ENCODE measurements at regions of chr12 and their contacts with region 1.

Region 1: DNA sequence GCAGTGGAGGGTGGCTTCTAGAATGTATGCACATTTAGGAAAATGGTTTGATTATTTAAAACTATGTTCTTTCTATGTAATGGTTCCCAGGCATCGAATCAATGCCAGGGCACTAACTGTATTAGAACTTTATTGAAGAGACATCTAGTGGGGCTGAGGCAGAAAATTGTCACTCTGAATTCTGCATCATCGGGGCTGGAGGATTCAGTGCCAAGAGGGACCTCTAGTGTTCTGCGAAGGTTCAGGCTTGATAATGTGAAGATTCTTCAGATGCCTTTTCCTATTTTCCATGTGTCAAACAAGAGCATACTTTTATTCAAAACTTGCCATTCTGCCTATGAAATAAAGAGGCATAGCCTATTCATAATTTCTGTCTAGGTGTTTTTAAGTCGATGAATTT is 146.3 kb downstream of the CAND1 start:
- DNase-seq: no peak
- H3K4me3 ChIP-seq: no peak overlapping the region
- H3K27ac ChIP-seq: no peak overlapping the region
- H3K4me1 ChIP-seq: peaks cover 3 to 25% (median 23%) of the 10 kb centered on the region in 4 experiments; a peak in 6 of 7 replicates
- H3K27me3 ChIP-seq: no peaks in the 10 kb centered on the region
- CTCF ChIP-seq: peak; percentile 30 to 73 (median 73)
- EP300 ChIP-seq: no peak
- POLR2A ChIP-seq: no peak
- RAD21 ChIP-seq: peak; percentile 85 to 86

Region 2: DNA sequence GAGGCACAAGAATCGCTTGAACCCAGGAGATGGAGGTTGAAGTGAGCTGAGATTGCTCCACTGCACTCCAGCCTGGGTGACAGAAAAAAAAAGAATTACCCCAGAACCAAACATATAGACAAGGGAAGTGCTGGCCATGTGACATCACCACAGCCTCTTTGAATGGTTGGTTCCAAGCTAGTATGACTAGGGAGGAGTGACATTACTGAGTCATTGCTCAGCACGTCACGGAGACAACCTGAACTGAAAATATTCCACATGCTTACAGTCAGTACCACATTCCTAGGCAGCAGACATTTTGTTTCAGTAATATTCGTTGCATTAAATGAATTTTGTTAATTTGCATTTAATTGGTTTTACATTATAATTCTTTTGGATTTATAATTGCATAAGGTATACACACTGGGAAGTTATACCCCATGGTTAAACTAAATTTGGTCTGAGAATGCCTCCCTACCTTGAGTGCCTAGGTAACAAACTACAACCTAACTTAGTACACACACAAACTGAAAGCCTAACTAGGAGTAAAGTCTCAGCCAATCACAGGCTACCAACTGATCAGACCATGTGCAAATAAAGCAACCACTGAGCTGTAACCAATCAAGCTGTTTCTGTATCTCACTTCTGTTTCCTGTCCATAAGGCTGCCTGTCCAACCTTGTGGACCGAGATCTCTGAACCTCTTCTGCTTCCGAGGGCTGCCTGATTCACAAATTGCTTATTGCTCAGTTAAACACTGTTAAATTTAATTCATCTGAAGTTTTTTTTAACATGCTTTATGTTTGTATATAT is 18.1 kb after region 1 on chr12:
- CTCF ChIA-PET with region 1: interaction called, 10 read pairs
- POLR2A ChIA-PET with region 1: interaction called, 3 read pairs
- DNase-seq: no peak
- H3K4me3 ChIP-seq: no peak overlapping the region
- H3K27ac ChIP-seq: no peak overlapping the region
- H3K4me1 ChIP-seq: no peaks in the 10 kb centered on the region
- H3K27me3 ChIP-seq: no peaks in the 10 kb centered on the region
- CTCF ChIP-seq: no peak
- EP300 ChIP-seq: no peak
- POLR2A ChIP-seq: no peak
- RAD21 ChIP-seq: no peak

Measured in H1 (cell line).